Dorsolateral prefrontal cortex (tissue), 120 donors: ENCODE measurements at regions of chr5 and their contacts with region 1.

Region 1: GRCh38 chr5:5135957-5136676 is 4.0 kb upstream of the ADAMTS16 start:
- DNase-seq: no peak
- H3K4me3 ChIP-seq: no peak overlapping the region
- H3K27ac ChIP-seq: no peak overlapping the region
- H3K27me3 ChIP-seq: peaks cover 0 to 20% (median 11%) of the 10 kb centered on the region in 45 donors
- CTCF ChIP-seq: no peak

Region 2: DNA sequence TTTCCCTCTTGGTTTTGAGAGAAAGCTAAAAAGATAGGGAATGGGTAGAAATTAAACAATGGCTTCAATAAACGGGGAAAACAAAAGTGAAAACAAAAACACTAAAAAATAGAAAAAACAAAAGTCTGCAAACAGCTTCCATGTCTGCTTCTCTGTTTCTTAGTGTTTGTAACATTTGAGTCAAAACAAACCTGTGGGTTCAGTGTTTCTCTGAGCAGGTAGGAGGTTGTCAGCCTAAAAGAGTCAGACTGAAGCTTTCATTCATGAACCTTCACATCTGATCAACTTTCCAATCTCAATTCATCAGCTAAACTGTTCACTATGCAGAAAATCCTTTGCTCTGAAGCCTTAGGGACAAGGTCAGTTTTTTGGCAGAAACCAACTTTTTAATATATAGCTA is 98.4 kb before region 1 on chr5:
- intact Hi-C with region 1: no loop called
- DNase-seq: no peak
- H3K4me3 ChIP-seq: no peak overlapping the region
- H3K27ac ChIP-seq: no peak overlapping the region
- H3K27me3 ChIP-seq: peaks cover 0 to 6% (median 0%) of the 10 kb centered on the region in 45 donors
- CTCF ChIP-seq: no peak

Region 3: GRCh38 chr5:5398046-5398445 is 261.9 kb after region 1 on chr5:
- intact Hi-C with region 1: loop called (anchors 2 to 5 kb)
- DNase-seq: no peak
- H3K4me3 ChIP-seq: no peak overlapping the region
- H3K27ac ChIP-seq: no peak overlapping the region
- H3K27me3 ChIP-seq: no peaks in the 10 kb centered on the region
- CTCF ChIP-seq: no peak